GM10248 (cell line): ENCODE measurements at regions of chr11 and their contacts with region 1.

Region 1: DNA sequence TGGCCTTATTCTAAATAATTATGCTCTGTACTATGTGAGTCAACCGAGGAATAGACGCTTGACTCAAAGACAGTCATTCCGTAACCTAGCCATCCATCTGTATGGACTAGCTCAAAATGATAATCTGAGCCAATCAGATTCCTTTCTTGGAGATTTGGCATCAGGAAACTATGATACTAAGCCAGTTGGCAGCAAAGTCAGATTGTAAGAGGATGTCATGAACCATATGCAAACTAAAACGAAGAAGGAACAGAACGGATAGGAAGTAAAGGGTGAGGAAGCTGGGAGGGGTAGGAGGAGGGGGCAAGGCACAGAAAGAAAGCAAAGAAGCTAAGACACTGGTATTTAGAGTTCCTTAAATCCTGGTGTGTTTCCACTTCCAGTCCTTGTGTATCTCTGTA is 10.7 kb upstream of the SESN3 start:
- DNase-seq: no peak
- CTCF ChIP-seq: no peak

Region 2: GRCh38 chr11:95231127-95231880 is 10.4 kb before region 1 on chr11 and contains the start of gene SESN3:
- CTCF ChIA-PET with region 1: interaction called, 19 read pairs
- POLR2A ChIA-PET with region 1: interaction called, 6 read pairs
- DNase-seq: peak; percentile 93
- CTCF ChIP-seq: no peak

Region 3: DNA sequence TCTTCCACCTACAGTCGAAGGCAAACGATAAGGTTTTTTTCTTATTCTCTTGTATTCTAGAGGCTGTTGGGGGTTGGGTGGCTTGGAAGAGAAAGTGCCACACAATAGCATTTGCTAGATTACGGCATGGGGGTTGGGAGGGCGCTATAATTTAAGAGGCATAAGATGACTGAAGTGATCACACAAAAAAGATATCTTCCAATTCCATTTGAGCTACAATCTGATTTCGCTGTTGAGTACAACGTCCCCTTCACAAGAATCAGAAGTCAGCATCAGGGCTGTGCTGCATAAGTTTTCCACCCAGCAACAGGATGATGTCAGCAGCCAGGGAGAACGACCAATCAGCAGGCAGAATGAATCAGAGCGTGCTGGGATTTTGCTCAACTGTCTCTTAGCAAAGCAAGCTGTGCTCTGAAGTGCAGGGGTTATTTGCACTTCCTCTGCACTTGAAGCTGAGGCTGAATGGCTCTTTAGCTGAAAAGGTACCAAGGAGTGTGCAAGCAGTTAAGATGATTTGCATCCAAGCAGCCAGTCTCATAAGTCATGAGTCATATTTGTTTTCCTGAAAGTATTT is 12.5 kb after region 1 on chr11:
- CTCF ChIA-PET with region 1: interaction called, 18 read pairs
- POLR2A ChIA-PET with region 1: no interaction called
- DNase-seq: peak; percentile 70
- CTCF ChIP-seq: no peak

Region 4: DNA sequence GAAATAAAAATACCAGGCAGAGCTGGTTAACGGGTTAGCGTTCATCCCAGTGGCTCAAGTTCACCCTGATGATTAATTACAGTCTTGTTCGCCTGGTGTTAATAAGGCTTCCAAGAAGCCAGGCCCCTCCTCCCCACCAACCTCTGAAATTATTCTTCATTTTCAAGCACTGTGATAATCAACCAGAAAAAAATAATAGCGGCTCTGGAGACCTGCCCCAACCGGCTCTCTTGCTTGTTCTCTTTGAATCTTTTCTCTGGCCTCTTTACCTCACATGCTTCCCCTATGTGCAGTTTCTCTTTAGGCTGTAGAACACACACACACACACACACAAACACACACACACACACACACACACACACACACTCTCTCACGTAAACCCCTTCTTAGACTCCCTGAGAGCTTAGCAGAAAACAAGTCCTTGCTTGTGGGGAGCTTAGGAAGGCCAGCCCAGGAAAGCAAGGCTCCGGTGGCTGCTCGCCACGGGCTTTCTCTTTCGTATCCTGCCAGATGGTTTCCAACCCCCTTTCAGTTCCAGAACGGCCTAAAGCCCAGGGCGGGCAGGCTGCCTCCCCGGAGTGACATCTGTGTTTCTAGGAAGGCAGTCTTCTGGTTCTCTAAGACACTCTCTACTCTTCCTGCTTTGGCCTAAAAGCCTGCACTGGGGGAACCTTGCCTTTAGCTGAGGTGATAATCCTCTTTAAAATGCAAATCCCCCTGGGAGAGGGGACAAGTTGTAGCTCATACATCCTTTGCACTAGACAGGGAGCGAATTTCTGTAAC is 95.7 kb after region 1 on chr11:
- CTCF ChIA-PET with region 1: no interaction called
- POLR2A ChIA-PET with region 1: no interaction called
- DNase-seq: peak; percentile 57
- CTCF ChIP-seq: no peak